Ovary (tissue), 10 donors: ENCODE measurements at regions of chr9 and their contacts with region 1.

Region 1: DNA sequence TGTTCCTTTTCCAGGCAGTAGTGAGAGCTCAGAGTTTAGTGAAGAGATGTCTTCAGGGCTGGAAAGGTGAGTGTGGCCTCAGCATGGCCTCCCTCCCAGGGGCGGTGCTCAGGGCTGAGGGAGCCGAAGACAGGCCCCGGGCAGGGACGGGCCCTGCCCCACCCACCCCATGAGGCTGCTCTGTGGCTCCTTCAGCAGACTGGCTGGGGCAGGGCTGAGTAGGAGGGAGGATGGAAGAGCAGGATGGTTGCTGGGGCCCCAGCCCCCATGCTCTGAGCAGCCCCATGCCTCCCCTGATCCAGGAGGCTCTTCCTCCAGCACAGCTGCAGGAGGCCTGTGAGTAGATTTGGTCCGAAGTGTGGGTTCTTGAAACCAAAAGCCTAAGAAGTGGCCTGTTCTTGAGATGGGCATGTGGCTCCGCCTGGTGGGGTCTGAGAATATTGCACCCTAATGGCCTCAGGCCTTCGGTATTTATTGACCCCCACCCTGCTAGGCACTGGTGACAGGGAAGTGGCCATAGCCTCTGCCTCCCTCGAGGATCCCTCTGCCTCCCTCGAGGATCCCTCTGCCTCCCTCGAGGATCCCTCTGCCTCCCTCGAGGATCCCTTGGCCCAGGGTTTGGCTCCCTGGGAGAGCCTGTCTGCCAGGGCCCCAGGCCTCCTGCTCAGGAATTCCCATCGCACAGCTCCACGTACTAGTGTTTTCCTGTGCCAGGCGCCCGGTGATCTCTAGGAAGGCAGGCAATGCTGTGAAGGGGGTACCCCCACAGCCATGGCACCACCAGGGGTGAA is 65.4 kb upstream of the GARNL3 start:
- DNase-seq: peak; percentile 75 to 90 (median 88)
- H3K4me3 ChIP-seq: no peak overlapping the region
- H3K27ac ChIP-seq: peak overlapping the region; percentile 66 to 80
- H3K4me1 ChIP-seq: peaks cover 21% of the 10 kb centered on the region
- H3K27me3 ChIP-seq: no peaks in the 10 kb centered on the region
- CTCF ChIP-seq: peak; percentile 94 to 98 (median 97)
- EP300 ChIP-seq: no peak
- POLR2A ChIP-seq: peak; percentile 37

Region 2: DNA sequence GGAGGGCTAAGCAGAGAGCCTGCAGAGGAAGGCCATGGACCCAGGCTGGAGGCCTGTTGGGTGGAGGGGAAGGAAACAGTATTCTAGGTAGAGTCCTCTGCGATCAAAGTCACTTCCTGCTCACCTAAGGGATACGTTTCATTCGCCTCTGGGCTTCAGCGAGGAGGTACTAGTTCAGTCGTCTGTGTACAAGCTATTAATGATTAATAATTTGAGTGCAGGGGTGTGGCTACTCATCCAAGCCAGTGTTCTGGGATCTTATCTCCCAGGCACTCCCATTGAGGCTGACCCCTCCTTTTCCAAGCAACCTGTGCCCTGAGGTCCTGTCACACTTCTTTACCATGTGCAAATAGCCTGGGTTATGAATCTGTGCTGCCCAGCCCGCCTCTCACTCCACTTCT is 259.4 kb before region 1 on chr9:
- intact Hi-C with region 1: loop called (anchors 1 to 2 kb)
- DNase-seq: no peak
- H3K4me3 ChIP-seq: no peak overlapping the region
- H3K27ac ChIP-seq: no peak overlapping the region
- H3K4me1 ChIP-seq: no peaks in the 10 kb centered on the region
- H3K27me3 ChIP-seq: no peaks in the 10 kb centered on the region
- CTCF ChIP-seq: no peak
- EP300 ChIP-seq: no peak
- POLR2A ChIP-seq: no peak

Region 3: DNA sequence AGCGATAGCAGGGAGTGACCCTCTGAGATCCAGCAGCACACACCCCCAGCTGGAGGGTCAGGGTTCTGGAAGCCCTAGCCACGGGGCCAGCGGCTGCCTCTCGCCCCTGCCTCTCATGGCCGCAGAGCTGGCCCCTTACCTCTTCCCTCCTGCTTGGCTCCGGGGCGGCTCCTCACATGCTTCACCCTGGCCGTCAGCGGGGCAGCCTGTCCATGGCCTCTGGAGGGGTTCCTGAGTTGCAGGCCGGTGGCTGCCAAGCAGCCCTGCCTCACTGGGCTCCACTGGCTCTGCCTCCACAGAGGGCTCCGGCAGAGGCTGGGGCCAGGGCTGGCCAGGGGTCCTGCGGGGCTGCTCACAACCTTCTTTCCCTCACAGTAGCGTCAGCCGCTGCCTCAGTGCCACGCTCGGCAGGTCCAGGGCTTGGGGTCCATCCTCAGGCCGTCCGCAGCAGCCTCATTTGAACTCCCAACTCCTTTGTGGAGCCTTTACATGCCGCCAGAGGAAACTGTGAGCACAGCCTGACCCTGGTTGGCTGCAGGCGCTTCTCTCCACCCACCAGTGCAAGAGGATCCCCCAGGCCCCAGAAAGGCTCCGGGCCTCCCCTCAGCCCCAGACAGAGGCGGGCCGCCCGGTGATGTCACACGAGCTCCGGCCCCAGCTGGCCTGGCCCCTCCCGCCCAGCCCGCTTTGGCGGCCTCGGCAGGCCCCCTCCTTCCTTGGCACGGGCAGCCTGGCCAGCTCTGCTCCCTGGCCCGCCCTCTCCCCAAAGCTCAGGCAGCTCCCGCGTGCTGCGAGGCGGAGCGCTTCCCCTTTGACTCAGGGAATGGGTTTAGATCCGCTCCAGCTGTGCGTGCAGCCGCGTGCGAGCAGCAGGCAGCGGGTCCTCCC is 76.8 kb before region 1 on chr9 and contains the start of gene ANGPTL2:
- intact Hi-C with region 1: loop called in 1 of 4 experiments (anchors 5 kb)
- DNase-seq: peak; percentile 95 to 97 (median 96)
- H3K4me3 ChIP-seq: peak within 1 kb of the TSS; percentile 52
- H3K27ac ChIP-seq: peak within 1 kb of the TSS; percentile 61 to 88
- H3K4me1 ChIP-seq: peaks cover 17% of the 10 kb centered on the region
- H3K27me3 ChIP-seq: no peaks in the 10 kb centered on the region
- CTCF ChIP-seq: peak in 1 of 3 donors; percentile 27
- EP300 ChIP-seq: peak; percentile 44
- POLR2A ChIP-seq: peak; percentile 85
- total RNA-seq, gene ANGPTL2: 9.8 to 108 (median 64.1) TPM